ENCODE measurements at regions of chr2 and their contacts with region 1.

Region 1: DNA sequence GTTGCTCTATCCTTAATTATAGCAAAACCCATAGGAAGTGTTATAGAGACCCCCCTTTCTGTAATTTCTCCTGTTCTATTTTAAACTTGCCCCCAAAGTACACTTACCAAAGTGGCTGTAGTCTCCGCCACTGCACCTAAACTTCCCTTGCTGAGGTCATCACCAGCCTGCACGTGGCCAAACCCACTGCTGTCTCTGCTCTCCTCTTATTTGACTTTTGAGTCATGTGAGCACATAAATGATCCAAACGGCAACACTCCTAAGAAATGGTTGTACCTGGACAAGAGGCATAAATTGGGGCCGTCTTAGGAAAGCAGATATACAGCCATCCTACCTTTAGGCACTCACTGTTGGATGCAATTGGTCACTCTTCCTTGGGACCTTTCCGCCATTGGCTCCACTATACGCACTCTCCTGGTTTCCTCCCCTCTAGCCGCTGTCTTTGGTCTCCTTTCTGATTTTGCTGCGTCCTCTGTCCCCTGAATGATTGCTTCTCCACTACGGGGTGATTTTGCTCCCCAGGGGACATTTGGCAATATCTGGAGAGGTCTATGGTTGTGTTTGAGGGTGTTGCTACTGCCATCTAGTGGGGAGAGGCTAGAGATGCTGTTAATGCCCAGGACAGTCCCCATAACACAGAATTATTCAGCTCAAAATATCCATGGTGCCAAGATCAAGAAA is 19.2 kb upstream of the IL36G start:
- DNase-seq: peak; percentile 58
- H3K4me3 Mint-ChIP-seq: no peak overlapping the region
- H3K27ac Mint-ChIP-seq: no peak overlapping the region
- H3K4me1 Mint-ChIP-seq: no peaks in the 10 kb centered on the region
- H3K27me3 Mint-ChIP-seq: no peaks in the 10 kb centered on the region
- CTCF ChIP-seq: peak; percentile 71

Region 2: GRCh38 chr2:112601751-112602150 is 356.8 kb before region 1 on chr2:
- CTCF ChIA-PET with region 1: no interaction called
- intact Hi-C with region 1: loop called (anchors 5 kb)
- DNase-seq: no peak
- H3K4me3 Mint-ChIP-seq: no peak overlapping the region
- H3K27ac Mint-ChIP-seq: no peak overlapping the region
- H3K4me1 Mint-ChIP-seq: peaks cover 27% of the 10 kb centered on the region
- H3K27me3 Mint-ChIP-seq: no peaks in the 10 kb centered on the region
- CTCF ChIP-seq: no peak

Region 3: GRCh38 chr2:113012436-113013335 is 54.1 kb after region 1 on chr2:
- CTCF ChIA-PET with region 1: no interaction called
- intact Hi-C with region 1: no loop called
- DNase-seq: peak; percentile 14
- H3K4me3 Mint-ChIP-seq: no peak overlapping the region
- H3K27ac Mint-ChIP-seq: peak overlapping the region; percentile 78
- H3K4me1 Mint-ChIP-seq: peaks cover 6% of the 10 kb centered on the region
- H3K27me3 Mint-ChIP-seq: peaks cover under 1% of the 10 kb centered on the region
- CTCF ChIP-seq: no peak

Region 4: DNA sequence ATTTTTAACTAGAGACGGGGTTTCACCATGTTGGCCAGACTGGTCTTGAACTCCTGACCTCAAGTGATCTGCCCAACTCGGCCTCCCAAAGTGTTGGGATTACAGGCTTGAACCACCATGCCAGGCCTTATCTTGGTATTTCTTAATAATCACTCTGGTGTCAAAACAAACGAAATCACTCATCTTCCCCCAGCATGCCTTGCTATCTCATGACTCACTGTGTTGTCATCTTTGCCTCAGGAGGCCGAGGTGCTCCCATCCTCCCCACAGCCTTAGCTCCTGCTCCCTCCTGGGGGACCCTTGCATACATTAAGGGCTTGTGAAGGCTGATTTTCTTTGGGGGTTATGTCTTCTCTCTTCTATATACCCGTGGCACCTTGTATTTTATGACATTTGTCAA is 1233.8 kb after region 1 on chr2:
- CTCF ChIA-PET with region 1: no interaction called
- intact Hi-C with region 1: no loop called
- DNase-seq: no peak
- H3K4me3 Mint-ChIP-seq: no peak overlapping the region
- H3K27ac Mint-ChIP-seq: peak overlapping the region; percentile 17
- H3K4me1 Mint-ChIP-seq: peaks cover 16% of the 10 kb centered on the region
- H3K27me3 Mint-ChIP-seq: no peaks in the 10 kb centered on the region
- CTCF ChIP-seq: no peak

Measured in Calu3 (cell line).